Mammary epithelial cell (primary cell): ENCODE measurements at regions of chr2 and their contacts with region 1.

Region 1: GRCh38 chr2:120680136-120680761 is 55.4 kb upstream of the GLI2 start:
- DNase-seq: peak; percentile 67
- H3K4me3 ChIP-seq: no peak overlapping the region
- H3K27ac ChIP-seq: no peak overlapping the region
- H3K4me1 ChIP-seq: no peaks in the 10 kb centered on the region
- H3K27me3 ChIP-seq: no peaks in the 10 kb centered on the region
- CTCF ChIP-seq: peak; percentile 55 to 71

Region 2: DNA sequence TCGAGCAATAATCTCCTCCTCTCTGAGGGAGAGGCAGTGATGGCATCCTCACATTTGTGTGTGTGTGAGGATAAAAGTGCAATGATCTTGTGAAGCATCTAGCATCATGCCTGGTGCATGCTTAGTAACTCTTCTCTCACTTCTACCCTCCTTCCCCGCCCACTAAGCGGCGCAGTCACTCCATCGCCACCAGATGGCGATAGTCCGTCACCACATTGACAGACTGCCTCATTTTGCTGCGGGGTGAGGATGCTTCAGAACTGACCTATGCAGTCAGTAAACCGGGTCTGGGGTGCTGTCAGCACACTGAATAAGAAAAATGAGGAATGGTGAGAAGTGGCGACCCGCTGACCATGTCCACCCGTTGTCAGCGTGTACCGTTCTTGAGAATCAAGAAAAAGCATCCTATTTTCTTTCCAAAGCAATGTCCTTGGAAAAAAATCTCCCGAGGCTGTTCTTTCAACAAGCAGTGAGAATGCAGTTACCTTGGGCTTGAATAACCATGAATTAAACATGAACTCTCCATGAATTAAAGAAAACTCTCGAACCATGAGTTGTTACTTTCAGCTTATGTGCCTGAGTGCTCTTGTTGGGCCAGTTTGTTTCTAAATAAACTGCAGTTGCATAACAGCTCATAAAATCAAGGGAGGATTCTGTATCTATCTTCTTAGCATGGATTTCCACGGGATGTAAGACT is 1038.5 kb before region 1 on chr2:
- CTCF ChIA-PET with region 1: no interaction called
- dilution Hi-C with region 1: no loop called
- in situ Hi-C with region 1: no loop called
- intact Hi-C with region 1: loop called (anchors 10 kb)
- DNase-seq: peak; percentile 67
- H3K4me3 ChIP-seq: no peak overlapping the region
- H3K27ac ChIP-seq: no peak overlapping the region
- H3K4me1 ChIP-seq: no peaks in the 10 kb centered on the region
- H3K27me3 ChIP-seq: peaks cover 2% of the 10 kb centered on the region
- CTCF ChIP-seq: peak; percentile 98

Region 3: GRCh38 chr2:120231974-120232635 is 448.1 kb before region 1 on chr2:
- CTCF ChIA-PET with region 1: no interaction called
- dilution Hi-C with region 1: no loop called
- in situ Hi-C with region 1: no loop called
- intact Hi-C with region 1: loop called (anchors 5 kb)
- DNase-seq: peak; percentile 58
- H3K4me3 ChIP-seq: peak overlapping the region; percentile 54 to 58 (median 57)
- H3K27ac ChIP-seq: peak overlapping the region; percentile 62
- H3K4me1 ChIP-seq: peaks cover 5% of the 10 kb centered on the region
- H3K27me3 ChIP-seq: no peaks in the 10 kb centered on the region
- CTCF ChIP-seq: no peak

Region 4: GRCh38 chr2:120343433-120344105 is 336.7 kb before region 1 on chr2:
- CTCF ChIA-PET with region 1: interaction called, 3 read pairs
- dilution Hi-C with region 1: no loop called
- in situ Hi-C with region 1: loop called (anchors 5 to 10 kb)
- intact Hi-C with region 1: loop called (anchors 1 kb)
- DNase-seq: peak; percentile 57
- H3K4me3 ChIP-seq: peak overlapping the region in 1 of 3 experiments; percentile 3
- H3K27ac ChIP-seq: no peak overlapping the region
- H3K4me1 ChIP-seq: peaks cover 23% of the 10 kb centered on the region
- H3K27me3 ChIP-seq: peaks cover 44% of the 10 kb centered on the region
- CTCF ChIP-seq: peak; percentile 48 to 85

Region 5: GRCh38 chr2:120508567-120509041 is 171.6 kb before region 1 on chr2:
- CTCF ChIA-PET with region 1: no interaction called
- dilution Hi-C with region 1: no loop called
- in situ Hi-C with region 1: no loop called
- intact Hi-C with region 1: loop called (anchors 2 kb)
- DNase-seq: peak; percentile 70
- H3K4me3 ChIP-seq: no peak overlapping the region
- H3K27ac ChIP-seq: no peak overlapping the region
- H3K4me1 ChIP-seq: peaks cover 20% of the 10 kb centered on the region
- H3K27me3 ChIP-seq: no peaks in the 10 kb centered on the region
- CTCF ChIP-seq: peak in 1 of 2 donors; percentile 43

Region 6: DNA sequence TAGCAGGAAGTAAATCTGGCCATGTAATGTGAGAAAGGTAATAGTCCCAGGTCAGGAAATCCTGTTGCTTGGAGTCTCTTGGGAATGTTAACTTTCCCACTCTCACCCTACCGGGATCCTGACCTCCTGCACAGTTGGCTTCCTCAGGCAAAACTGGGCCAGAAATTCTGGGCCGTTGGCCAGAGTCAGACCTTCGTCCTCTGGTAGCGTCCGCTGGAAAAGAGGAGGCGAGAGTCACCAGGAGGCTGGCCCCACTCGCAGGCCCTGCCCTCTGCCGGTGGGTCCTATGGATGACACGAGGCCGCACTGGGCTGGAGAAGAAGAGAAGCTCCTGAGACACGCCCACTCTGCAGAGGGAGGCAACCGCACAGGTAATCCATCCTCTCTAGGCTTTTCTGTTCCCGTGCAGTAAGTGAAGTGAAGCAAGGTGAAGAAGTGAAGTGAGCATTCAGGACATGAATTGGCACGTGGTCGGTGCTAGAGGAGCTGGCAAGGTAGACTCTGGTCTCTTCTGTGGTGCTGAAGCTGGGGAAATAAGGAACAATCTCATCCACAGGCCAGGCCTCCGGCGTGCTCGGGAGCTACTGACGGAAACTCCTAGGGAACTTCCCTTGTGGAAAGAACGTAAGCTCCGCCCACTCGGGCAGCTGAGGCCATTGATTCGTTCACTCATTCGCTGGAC is 127.3 kb before region 1 on chr2:
- CTCF ChIA-PET with region 1: no interaction called
- dilution Hi-C with region 1: no loop called
- in situ Hi-C with region 1: no loop called
- intact Hi-C with region 1: loop called (anchors 1 kb)
- DNase-seq: peak; percentile 81
- H3K4me3 ChIP-seq: no peak overlapping the region
- H3K27ac ChIP-seq: no peak overlapping the region
- H3K4me1 ChIP-seq: no peaks in the 10 kb centered on the region
- H3K27me3 ChIP-seq: no peaks in the 10 kb centered on the region
- CTCF ChIP-seq: peak; percentile 70 to 88

Region 7: GRCh38 chr2:121052521-121052920 is 372.3 kb after region 1 on chr2:
- CTCF ChIA-PET with region 1: no interaction called
- dilution Hi-C with region 1: no loop called
- in situ Hi-C with region 1: no loop called
- intact Hi-C with region 1: no loop called
- DNase-seq: no peak
- H3K4me3 ChIP-seq: no peak overlapping the region
- H3K27ac ChIP-seq: no peak overlapping the region
- H3K4me1 ChIP-seq: no peaks in the 10 kb centered on the region
- H3K27me3 ChIP-seq: no peaks in the 10 kb centered on the region
- CTCF ChIP-seq: no peak